Activated CD8-positive, alpha-beta T cell treated with anti-CD3 and anti-CD28 coated beads for 36 hours (primary cell): ENCODE measurements at regions of chr10 and their contacts with region 1.

Region 1: GRCh38 chr10:71708301-71708703 is 11.3 kb downstream of the C10orf105 start:
- DNase-seq: peak; percentile 77
- ATAC-seq: peak; percentile 58
- H3K4me3 Mint-ChIP-seq: no peak overlapping the region
- H3K27ac Mint-ChIP-seq: peak overlapping the region; percentile 20
- H3K4me1 Mint-ChIP-seq: peaks cover 40% of the 10 kb centered on the region
- H3K27me3 Mint-ChIP-seq: no peaks in the 10 kb centered on the region
- CTCF ChIP-seq: peak; percentile 99

Region 2: GRCh38 chr10:71314028-71314693 is 394.1 kb before region 1 on chr10:
- CTCF ChIA-PET with region 1: interaction called, 16 read pairs
- POLR2A ChIA-PET with region 1: no interaction called
- intact Hi-C with region 1: no loop called
- DNase-seq: peak; percentile 48
- ATAC-seq: peak; percentile 25
- H3K4me3 Mint-ChIP-seq: no peak overlapping the region
- H3K27ac Mint-ChIP-seq: no peak overlapping the region
- H3K4me1 Mint-ChIP-seq: peaks cover 20% of the 10 kb centered on the region
- H3K27me3 Mint-ChIP-seq: peaks cover 5% of the 10 kb centered on the region
- CTCF ChIP-seq: peak; percentile 92

Region 3: DNA sequence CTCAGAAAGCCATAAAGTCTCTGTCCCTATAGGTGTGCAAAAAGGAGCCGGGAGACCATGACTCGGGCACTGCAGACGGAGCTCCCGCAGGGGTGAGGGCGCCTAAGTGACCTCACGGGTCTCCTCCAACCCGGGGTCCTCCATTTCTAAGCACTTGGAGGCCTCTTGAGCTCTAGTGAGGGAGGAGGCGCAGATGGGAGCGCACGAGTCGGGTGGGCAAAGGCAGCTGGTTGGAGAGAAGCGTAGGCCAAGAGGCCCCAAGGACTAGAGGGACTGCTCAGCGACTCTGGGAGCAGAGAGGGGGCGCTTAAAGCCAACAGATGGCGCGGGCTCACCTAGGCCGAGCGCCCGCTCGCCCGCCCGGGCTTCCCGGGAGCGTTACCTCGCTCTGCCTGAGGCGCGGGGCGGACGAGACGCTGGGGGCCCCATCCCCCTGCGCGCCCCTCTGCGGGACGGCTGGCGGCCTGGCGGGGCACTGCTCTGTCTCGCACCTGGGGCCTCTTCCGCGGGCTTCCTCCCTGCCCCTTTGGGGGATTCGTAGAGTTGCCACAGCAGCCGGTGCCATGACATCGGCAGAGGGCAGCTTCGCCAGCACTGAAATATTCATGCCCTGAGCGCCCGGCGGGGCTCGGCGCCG is 312.1 kb before region 1 on chr10:
- CTCF ChIA-PET with region 1: interaction called, 14 read pairs
- POLR2A ChIA-PET with region 1: no interaction called
- intact Hi-C with region 1: no loop called
- DNase-seq: peak; percentile 59
- ATAC-seq: peak; percentile 80
- H3K4me3 Mint-ChIP-seq: peak overlapping the region; percentile 22
- H3K27ac Mint-ChIP-seq: no peak overlapping the region
- H3K4me1 Mint-ChIP-seq: no peaks in the 10 kb centered on the region
- H3K27me3 Mint-ChIP-seq: peaks cover 51% of the 10 kb centered on the region
- CTCF ChIP-seq: peak; percentile 4

Region 4: DNA sequence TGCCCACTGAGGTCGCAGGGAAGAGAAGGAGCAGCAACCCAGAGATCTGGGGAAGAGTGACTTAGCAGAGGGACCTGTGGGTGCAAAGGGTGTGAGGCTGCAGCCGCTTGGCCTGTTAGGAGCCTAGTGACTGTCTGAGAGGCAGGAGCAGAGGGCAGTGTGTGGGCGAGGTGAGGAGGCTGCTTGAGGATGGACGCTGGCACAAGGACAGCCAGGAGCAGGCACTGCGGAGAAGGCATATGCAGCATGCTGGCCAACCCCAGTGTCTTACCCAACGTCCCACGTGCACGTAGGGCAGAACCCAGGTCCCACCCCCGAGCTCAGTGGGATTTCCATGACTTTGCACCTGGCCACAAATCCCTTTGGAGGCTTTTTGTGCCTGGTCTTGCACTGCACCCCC is 42.8 kb before region 1 on chr10:
- CTCF ChIA-PET with region 1: interaction called, 13 read pairs
- POLR2A ChIA-PET with region 1: interaction called, 3 read pairs
- intact Hi-C with region 1: no loop called
- DNase-seq: no peak
- ATAC-seq: no peak
- H3K4me3 Mint-ChIP-seq: no peak overlapping the region
- H3K27ac Mint-ChIP-seq: no peak overlapping the region
- H3K4me1 Mint-ChIP-seq: peaks cover 11% of the 10 kb centered on the region
- H3K27me3 Mint-ChIP-seq: no peaks in the 10 kb centered on the region
- CTCF ChIP-seq: no peak

Region 5: DNA sequence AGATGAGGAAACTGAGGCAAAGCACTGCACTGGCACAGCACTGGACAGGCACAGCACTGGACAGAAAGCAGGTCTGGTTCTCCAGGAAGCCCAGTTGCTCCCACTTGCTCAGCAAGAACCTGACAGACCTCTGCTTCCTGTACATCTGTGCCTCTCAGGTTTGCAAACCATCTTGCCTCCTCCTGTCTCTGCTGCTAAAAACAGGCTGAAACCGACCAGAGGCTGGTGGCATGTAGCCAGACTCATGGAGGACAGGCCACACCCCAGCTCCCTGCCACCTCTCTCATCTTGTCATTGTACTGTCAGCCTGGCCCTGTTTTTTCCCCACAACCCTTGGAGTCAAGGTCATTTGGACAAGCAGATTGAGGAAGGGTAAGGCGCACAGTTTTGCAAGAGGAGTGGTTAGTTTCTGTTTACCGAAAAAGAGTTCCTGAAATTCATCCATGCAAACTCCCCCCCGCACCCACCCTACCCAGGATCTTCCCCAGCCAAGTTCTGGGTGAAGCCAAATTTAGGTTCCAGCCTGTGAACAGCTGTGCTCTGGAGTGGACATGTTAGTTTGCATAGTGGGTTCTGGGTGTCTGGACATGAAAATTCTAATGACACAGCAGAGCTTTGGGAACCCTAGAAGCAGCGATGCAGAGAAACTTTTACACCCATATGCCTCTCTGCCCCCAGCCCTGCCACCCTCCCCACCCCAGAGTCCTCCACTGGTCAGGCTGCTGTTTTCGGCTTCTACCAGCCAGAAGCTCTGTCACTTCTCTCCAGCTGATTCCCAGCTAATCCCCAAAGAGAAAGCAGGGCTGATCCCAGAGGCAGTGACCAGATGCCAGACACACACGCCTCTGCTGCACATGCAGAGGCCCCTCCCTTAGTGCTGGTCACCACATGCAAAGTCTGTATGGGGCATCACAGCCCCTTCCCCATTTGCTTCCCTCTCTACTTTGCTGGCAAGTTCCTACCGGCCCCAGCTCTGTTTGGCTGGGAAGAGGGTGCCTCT is 19.7 kb after region 1 on chr10:
- CTCF ChIA-PET with region 1: interaction called, 57 read pairs
- POLR2A ChIA-PET with region 1: interaction called, 65 read pairs
- intact Hi-C with region 1: no loop called
- DNase-seq: peak; percentile 89
- ATAC-seq: peak; percentile 37
- H3K4me3 Mint-ChIP-seq: peak overlapping the region; percentile 58
- H3K27ac Mint-ChIP-seq: peak overlapping the region; percentile 99
- H3K4me1 Mint-ChIP-seq: peaks cover 97% of the 10 kb centered on the region
- H3K27me3 Mint-ChIP-seq: no peaks in the 10 kb centered on the region
- CTCF ChIP-seq: no peak

Region 6: GRCh38 chr10:71771821-71772617 is 63.7 kb after region 1 on chr10:
- CTCF ChIA-PET with region 1: interaction called, 29 read pairs
- POLR2A ChIA-PET with region 1: interaction called, 15 read pairs
- intact Hi-C with region 1: no loop called
- DNase-seq: peak; percentile 63
- ATAC-seq: no peak
- H3K4me3 Mint-ChIP-seq: peak overlapping the region; percentile 91
- H3K27ac Mint-ChIP-seq: peak overlapping the region; percentile 95
- H3K4me1 Mint-ChIP-seq: peaks cover 77% of the 10 kb centered on the region
- H3K27me3 Mint-ChIP-seq: no peaks in the 10 kb centered on the region
- CTCF ChIP-seq: no peak

Region 7: GRCh38 chr10:71939861-71940474 is 231.7 kb after region 1 on chr10:
- CTCF ChIA-PET with region 1: no interaction called
- POLR2A ChIA-PET with region 1: no interaction called
- intact Hi-C with region 1: no loop called
- DNase-seq: peak; percentile 10
- ATAC-seq: no peak
- H3K4me3 Mint-ChIP-seq: no peak overlapping the region
- H3K27ac Mint-ChIP-seq: no peak overlapping the region
- H3K4me1 Mint-ChIP-seq: peaks cover 12% of the 10 kb centered on the region
- H3K27me3 Mint-ChIP-seq: peaks cover 2% of the 10 kb centered on the region
- CTCF ChIP-seq: no peak